ENCODE measurements at regions of chr12 and their contacts with region 1.

Region 1: DNA sequence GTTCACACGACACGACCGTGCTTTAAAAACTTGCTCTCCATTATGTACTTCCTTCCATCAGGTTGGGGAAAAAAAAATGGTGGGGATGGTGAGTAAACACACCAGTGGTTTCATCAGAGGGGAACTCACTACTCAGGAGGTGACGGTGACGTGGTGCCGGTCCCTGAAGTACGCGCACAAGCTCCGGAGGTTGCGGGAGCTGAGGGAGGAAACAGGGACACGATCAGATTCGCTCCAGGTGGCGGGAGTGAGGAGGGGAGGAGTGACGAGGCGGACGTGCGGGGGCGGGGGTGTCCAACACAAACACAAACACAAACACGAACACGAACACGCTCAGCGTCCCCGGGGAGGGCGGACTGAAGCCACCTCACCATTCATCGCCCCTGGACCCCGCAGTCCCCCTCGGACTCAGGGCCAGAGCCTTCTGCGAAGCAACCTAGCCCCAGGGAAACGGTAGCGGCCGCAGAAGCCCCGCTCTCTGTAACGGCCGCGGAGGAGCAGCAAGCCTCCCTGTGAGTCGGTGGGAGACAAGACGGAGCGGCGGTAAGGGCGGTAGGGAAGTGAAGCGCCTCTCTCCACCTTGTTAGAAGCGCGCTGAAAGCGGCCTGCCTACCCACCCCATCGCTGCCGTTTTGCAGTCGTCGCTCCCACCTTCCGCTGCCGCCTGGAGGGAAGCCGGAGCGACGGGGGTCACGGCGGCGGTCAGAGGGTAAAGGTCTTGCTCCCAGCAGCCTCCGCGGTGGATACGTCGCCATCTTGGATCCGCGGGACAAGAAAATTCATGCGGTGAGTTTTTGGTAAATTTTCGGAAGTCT is at the start of gene CNOT2:
- DNase-seq: peak; percentile 90
- H3K4me3 ChIP-seq: peak within 1 kb of the TSS; percentile 98
- H3K27ac ChIP-seq: peak within 1 kb of the TSS; percentile 98
- H3K4me1 ChIP-seq: peaks cover 53% of the 10 kb centered on the region
- CTCF ChIP-seq: no peak
- total RNA-seq, gene CNOT2: 123 and 146 TPM in 2 replicates

Region 2: DNA sequence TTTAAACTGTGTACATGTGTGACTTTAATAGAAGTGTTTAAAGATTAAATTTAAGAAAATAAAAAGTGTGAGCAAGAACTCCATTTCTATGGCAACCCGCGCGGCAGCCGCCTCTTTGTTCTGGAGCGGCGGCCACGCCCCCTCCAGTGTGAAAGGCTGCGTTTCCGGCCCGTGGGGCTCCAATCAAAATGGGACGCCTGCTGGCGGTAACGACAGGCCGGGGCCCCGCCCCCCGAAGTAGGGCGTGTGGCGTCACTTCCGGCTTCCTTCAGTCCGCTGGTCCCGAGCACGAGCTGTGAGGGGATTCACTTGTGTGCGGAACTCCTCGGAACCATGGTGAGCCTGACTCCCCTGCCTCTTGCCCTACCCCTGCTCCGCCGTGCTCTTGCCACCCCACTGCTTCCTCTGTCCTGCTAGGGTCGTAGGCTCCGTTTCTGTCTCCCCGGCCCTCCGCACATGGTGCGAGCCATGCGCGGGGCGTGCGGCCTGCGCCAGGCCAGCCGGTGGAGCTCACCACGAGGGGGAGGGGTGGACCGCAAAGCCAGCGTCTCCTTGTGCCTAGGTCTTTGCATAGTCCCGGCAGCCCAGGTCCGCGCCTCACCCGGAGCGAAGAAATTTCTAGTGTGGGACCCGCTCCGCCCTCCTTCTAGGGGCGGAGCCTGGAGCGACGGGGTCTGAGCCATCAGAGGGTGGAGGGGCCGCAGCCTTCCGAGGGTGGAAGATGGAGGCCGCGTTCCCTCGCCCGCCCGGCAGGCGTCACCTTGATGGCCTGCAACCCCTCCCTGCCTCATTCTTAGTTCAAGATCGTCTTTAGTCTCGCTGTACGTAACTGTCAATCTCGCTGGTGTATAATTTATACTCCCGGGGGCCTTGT is 657.5 kb before region 1 on chr12 and contains the start of gene CCT2:
- CTCF ChIA-PET with region 1: no interaction called
- POLR2A ChIA-PET with region 1: no interaction called
- intact Hi-C with region 1: loop called (anchors 5 kb)
- DNase-seq: peak; percentile 99
- H3K4me3 ChIP-seq: peak within 1 kb of the TSS; percentile 91
- H3K27ac ChIP-seq: peak within 1 kb of the TSS; percentile 79
- H3K4me1 ChIP-seq: peaks cover 12% of the 10 kb centered on the region
- CTCF ChIP-seq: peak; percentile 62
- total RNA-seq, gene CCT2: 248 and 264 TPM in 2 replicates

Region 3: DNA sequence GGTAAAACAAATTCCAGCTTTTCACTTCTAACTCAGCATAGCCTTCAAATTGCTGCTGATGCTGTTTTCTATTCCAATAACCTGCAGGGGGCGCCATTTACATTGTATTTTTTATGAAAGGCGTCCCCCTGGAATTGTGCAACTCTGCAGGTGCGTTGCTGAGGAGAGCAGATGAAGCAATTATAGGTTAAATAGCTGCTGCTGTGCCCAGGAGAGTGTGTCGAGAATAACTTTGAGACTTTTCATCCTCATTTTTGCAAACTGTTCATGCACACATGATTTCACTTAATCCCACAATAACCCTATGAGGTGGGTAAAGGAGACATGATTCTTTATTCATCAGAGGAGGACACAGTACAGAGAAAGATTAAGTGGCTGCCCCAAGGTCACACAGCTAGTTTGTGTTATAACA is 342.2 kb before region 1 on chr12:
- CTCF ChIA-PET with region 1: no interaction called
- POLR2A ChIA-PET with region 1: interaction called, 4 read pairs
- intact Hi-C with region 1: loop called (anchors 2 kb)
- DNase-seq: peak; percentile 92
- H3K4me3 ChIP-seq: peak overlapping the region; percentile 20
- H3K27ac ChIP-seq: peak overlapping the region; percentile 54
- H3K4me1 ChIP-seq: peaks cover 59% of the 10 kb centered on the region
- CTCF ChIP-seq: peak; percentile 97

Region 4: DNA sequence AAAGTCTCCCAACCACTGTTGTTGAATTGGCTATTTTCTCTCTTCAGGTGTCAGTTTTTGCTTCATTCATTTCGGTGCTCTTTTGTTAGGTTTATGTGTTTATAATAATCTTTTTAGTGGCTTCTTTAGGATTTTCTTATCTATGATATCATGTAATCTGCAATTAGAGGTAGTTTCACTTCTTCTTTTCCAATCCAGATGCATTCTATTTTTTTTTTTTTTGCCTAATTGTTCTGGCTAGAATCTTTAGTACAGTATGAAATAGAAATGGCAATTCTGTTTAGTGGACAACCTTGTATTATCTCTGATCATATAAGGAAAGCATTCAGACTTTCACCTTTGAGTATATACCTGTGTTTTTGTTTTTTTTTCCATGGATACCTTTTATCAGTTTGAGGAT is 17.7 kb after region 1 on chr12:
- CTCF ChIA-PET with region 1: no interaction called
- POLR2A ChIA-PET with region 1: interaction called, 6 read pairs
- intact Hi-C with region 1: loop called (anchors 2 kb)
- DNase-seq: peak; percentile 65
- H3K4me3 ChIP-seq: peak overlapping the region; percentile 37
- H3K27ac ChIP-seq: peak overlapping the region; percentile 70
- H3K4me1 ChIP-seq: peaks cover 87% of the 10 kb centered on the region
- CTCF ChIP-seq: no peak

Region 5: GRCh38 chr12:70317781-70318180 is 74.9 kb after region 1 on chr12:
- CTCF ChIA-PET with region 1: no interaction called
- POLR2A ChIA-PET with region 1: no interaction called
- intact Hi-C with region 1: loop called (anchors 5 kb)
- DNase-seq: peak; percentile 57
- H3K4me3 ChIP-seq: peak overlapping the region; percentile 16
- H3K27ac ChIP-seq: peak overlapping the region; percentile 50
- H3K4me1 ChIP-seq: peaks cover 34% of the 10 kb centered on the region
- CTCF ChIP-seq: no peak

Region 6: DNA sequence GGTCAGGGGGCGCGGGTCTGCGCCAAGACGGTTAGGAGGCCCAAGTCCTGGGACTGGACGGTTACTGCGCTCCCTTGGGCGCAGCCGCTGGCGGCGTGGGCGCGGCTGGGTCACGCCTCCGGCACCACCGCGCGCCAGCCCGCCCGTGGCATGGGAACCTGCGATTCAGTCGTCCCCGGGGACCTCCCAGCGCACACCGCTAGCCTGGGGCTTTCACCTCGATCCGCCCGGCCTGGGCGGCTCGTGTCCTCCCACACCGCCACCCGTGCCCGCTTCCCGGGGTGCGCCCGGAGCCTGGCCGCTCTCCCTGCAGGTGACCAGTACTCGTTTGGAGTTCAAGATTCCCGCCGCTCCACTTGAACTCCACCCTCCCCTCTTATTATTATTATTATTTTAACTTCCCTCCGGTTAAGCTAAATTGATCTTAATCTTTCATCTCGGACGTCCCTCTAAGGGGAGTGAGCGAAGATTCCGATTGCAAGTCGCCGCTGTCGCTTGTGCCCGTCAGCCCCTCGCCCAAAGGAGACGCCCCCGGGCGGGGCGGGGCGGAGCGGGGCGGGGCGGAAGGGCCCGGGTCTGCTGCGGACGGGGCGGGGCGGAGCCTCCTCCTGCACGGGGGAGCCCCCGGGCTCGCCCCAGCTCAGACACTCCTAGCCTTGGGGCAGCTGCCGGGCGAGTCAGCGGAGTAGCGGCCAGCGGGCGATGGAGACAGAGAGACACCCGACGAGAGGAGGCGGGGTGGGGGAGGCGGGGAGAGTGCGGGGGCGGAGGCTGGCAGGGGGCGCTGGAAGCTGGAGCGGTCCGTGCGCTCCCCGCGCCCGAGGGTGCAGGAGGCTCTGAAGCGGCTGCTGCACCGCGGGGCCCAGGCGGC is 123.0 kb after region 1 on chr12 and contains the start of gene KCNMB4:
- CTCF ChIA-PET with region 1: no interaction called
- POLR2A ChIA-PET with region 1: interaction called, 13 read pairs
- intact Hi-C with region 1: loop called (anchors 1 kb)
- DNase-seq: peak; percentile 82
- H3K4me3 ChIP-seq: peak within 1 kb of the TSS; percentile 74
- H3K27ac ChIP-seq: peak within 1 kb of the TSS; percentile 50
- H3K4me1 ChIP-seq: peaks cover 47% of the 10 kb centered on the region
- CTCF ChIP-seq: 0 out of 2 replicates have a peak, but pooled peaks have one; percentile 20
- total RNA-seq, gene KCNMB4: 3.0 and 5.8 TPM in 2 replicates

Region 7: GRCh38 chr12:70487440-70487839 is 244.5 kb after region 1 on chr12:
- CTCF ChIA-PET with region 1: no interaction called
- POLR2A ChIA-PET with region 1: no interaction called
- intact Hi-C with region 1: loop called (anchors 10 kb)
- DNase-seq: peak; percentile 51
- H3K4me3 ChIP-seq: peak overlapping the region; percentile 9
- H3K27ac ChIP-seq: peak overlapping the region; percentile 63
- H3K4me1 ChIP-seq: peaks cover 44% of the 10 kb centered on the region
- CTCF ChIP-seq: no peak